Caco-2 (cell line): ENCODE measurements at regions of chr10 and their contacts with region 1.

Region 1: GRCh38 chr10:21364196-21365114 is 161.0 kb downstream of the SKIDA1 start:
- DNase-seq: peak; percentile 94 to 95
- H3K4me3 ChIP-seq: no peak overlapping the region
- H3K4me3 Mint-ChIP-seq: peak overlapping the region; percentile 68
- H3K27ac Mint-ChIP-seq: peak overlapping the region; percentile 93
- H3K4me1 ChIP-seq: peaks cover 76% of the 10 kb centered on the region
- H3K4me1 Mint-ChIP-seq: peaks cover 49% of the 10 kb centered on the region
- H3K27me3 ChIP-seq: no peaks in the 10 kb centered on the region
- H3K27me3 Mint-ChIP-seq: no peaks in the 10 kb centered on the region
- CTCF ChIP-seq: no peak

Region 2: DNA sequence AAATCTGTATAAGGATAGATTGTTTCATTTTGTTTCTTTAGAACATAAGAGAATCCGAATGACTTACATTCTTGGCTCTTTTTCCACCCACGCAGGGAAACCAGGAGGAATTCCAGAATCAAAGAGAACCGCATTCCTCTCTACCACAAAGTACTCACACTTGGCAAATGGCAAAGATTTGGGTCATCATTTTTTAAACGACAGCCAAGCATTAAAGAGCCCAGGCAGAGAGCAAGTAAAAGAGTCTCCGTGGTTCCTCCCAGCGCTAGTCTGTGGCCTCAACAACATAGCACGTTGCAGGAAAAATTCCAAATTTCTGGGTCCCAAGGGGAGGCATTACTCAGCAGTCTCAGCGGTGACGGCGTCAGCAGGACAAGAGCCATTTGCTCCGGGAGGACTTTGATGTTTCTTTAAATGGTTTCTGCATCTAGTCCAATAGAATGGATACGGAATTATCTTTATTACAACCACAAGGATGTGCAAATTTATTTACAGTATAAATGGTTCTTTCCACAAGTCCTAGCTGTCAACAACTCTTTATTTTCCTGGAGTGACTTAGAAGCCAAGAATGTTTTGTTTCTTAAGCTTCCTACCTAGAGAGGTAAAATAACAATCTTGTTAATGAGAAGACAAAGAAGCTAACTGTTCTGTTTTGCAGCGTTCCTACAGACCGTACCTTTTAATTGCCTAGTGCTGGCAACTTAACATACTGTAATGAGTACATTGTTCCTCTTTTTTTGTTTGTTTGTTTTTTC is 71.5 kb before region 1 on chr10:
- CTCF ChIA-PET with region 1: no interaction called
- POLR2A ChIA-PET with region 1: interaction called, 3 read pairs
- intact Hi-C with region 1: loop called (anchors 1 kb)
- DNase-seq: peak; percentile 85
- H3K4me3 ChIP-seq: peak overlapping the region; percentile 29
- H3K4me3 Mint-ChIP-seq: peak overlapping the region; percentile 73
- H3K27ac Mint-ChIP-seq: peak overlapping the region; percentile 65
- H3K4me1 ChIP-seq: peaks cover 48% of the 10 kb centered on the region
- H3K4me1 Mint-ChIP-seq: peaks cover 40% of the 10 kb centered on the region
- H3K27me3 ChIP-seq: no peaks in the 10 kb centered on the region
- H3K27me3 Mint-ChIP-seq: no peaks in the 10 kb centered on the region
- CTCF ChIP-seq: no peak

Region 3: GRCh38 chr10:21315645-21316281 is 48.7 kb before region 1 on chr10:
- CTCF ChIA-PET with region 1: no interaction called
- POLR2A ChIA-PET with region 1: no interaction called
- intact Hi-C with region 1: loop called (anchors 2 kb)
- DNase-seq: peak; percentile 73 to 81
- H3K4me3 ChIP-seq: no peak overlapping the region
- H3K4me3 Mint-ChIP-seq: peak overlapping the region; percentile 28
- H3K27ac Mint-ChIP-seq: peak overlapping the region; percentile 75
- H3K4me1 ChIP-seq: peaks cover 31% of the 10 kb centered on the region
- H3K4me1 Mint-ChIP-seq: peaks cover 40% of the 10 kb centered on the region
- H3K27me3 ChIP-seq: no peaks in the 10 kb centered on the region
- H3K27me3 Mint-ChIP-seq: no peaks in the 10 kb centered on the region
- CTCF ChIP-seq: no peak

Region 4: DNA sequence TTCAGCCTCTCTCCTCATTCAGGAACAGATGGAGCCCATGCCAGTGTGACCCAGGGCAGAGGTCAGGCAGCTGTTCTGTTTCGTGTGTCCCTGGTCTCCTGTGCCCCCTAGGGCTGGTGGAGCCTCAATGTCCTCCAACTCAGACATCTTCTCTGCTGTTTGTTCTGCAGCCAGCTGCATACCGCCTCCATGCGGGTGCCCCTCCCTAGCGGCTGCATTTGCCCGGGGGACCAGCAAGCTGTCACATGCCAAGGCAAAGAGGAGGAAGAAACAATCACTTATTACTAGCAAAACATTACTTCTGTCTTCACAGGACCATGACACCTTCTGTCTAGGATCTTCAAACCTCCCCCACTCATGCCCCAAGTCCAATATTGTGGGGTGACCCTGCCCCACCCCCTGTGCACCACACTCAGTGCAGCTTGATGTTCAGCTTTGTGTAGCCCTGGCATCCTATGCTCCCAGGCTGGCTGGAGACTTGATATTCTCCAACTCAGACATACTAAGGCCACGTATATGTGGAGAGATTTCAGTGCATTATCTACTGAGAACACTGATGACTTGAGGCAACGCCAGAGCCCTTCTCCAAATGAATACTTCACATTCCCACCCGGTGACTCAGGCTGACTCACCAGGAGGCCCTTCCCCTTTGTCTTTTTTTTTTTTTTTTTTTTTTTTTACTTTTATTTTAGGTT is 27.8 kb before region 1 on chr10:
- CTCF ChIA-PET with region 1: no interaction called
- POLR2A ChIA-PET with region 1: no interaction called
- intact Hi-C with region 1: loop called (anchors 1 kb)
- DNase-seq: peak; percentile 90 to 94
- H3K4me3 ChIP-seq: no peak overlapping the region
- H3K4me3 Mint-ChIP-seq: peak overlapping the region; percentile 30
- H3K27ac Mint-ChIP-seq: peak overlapping the region; percentile 91
- H3K4me1 ChIP-seq: peaks cover 47% of the 10 kb centered on the region
- H3K4me1 Mint-ChIP-seq: peaks cover 31% of the 10 kb centered on the region
- H3K27me3 ChIP-seq: no peaks in the 10 kb centered on the region
- H3K27me3 Mint-ChIP-seq: no peaks in the 10 kb centered on the region
- CTCF ChIP-seq: peak; percentile 11 to 19

Region 5: GRCh38 chr10:21432271-21432670 is 67.8 kb after region 1 on chr10:
- CTCF ChIA-PET with region 1: no interaction called
- POLR2A ChIA-PET with region 1: no interaction called
- intact Hi-C with region 1: loop called (anchors 1 kb)
- DNase-seq: peak; percentile 58 to 69
- H3K4me3 ChIP-seq: no peak overlapping the region
- H3K4me3 Mint-ChIP-seq: peak overlapping the region; percentile 8
- H3K27ac Mint-ChIP-seq: peak overlapping the region; percentile 65
- H3K4me1 ChIP-seq: peaks cover 54% of the 10 kb centered on the region
- H3K4me1 Mint-ChIP-seq: peaks cover 47% of the 10 kb centered on the region
- H3K27me3 ChIP-seq: no peaks in the 10 kb centered on the region
- H3K27me3 Mint-ChIP-seq: no peaks in the 10 kb centered on the region
- CTCF ChIP-seq: no peak

Region 6: DNA sequence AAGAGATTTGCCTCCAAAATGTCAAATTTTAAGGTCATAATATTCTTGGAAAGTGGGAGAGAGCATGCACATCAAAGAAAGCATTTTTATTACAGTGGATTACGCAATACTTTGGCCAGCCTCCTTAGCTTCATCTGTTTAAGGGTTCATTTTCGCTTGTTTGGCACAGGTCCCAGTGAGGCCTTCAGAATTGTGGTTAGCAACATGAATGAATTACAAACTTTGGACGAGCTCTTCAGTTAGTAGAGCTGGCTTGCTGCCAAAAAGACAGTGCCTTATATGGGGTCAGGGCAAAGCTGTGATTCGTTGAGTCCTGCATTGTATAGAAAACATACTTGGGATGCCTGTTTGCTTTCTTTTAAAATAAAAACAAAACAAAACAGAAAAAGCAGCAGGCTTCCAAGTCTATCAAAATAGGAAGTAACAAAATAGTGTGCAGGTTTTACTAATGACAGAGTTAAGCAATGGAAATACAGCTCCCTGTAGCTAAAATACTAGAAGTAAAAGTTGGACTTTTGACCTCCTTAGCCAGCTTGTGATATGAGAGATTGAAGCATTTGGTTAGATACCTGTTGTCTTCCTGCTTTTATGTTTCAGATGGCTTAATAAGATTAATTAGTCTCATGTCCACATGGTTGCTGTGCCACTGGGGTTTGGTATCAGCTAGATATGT is 360.4 kb after region 1 on chr10:
- CTCF ChIA-PET with region 1: no interaction called
- POLR2A ChIA-PET with region 1: no interaction called
- intact Hi-C with region 1: loop called (anchors 10 kb)
- DNase-seq: peak; percentile 39 to 65
- H3K4me3 ChIP-seq: no peak overlapping the region
- H3K4me3 Mint-ChIP-seq: no peak overlapping the region
- H3K27ac Mint-ChIP-seq: no peak overlapping the region
- H3K4me1 ChIP-seq: peaks cover 36% of the 10 kb centered on the region
- H3K4me1 Mint-ChIP-seq: peaks cover 35% of the 10 kb centered on the region
- H3K27me3 ChIP-seq: no peaks in the 10 kb centered on the region
- H3K27me3 Mint-ChIP-seq: no peaks in the 10 kb centered on the region
- CTCF ChIP-seq: no peak